Dendritic cell treated with granulocyte-macrophage colony-stimulating factor and Interleukin-4, amounts not matched to agents 40 ng/mL and 50 ng/mL, for 4 days (primary cell): ENCODE measurements at regions of chr12 and their contacts with region 1.

Region 1: GRCh38 chr12:85866986-85867776 is 6.9 kb upstream of the NTS start:
- H3K4me3 Mint-ChIP-seq: no peak overlapping the region
- H3K27ac Mint-ChIP-seq: no peak overlapping the region
- H3K4me1 Mint-ChIP-seq: no peaks in the 10 kb centered on the region
- H3K27me3 Mint-ChIP-seq: no peaks in the 10 kb centered on the region

Region 2: DNA sequence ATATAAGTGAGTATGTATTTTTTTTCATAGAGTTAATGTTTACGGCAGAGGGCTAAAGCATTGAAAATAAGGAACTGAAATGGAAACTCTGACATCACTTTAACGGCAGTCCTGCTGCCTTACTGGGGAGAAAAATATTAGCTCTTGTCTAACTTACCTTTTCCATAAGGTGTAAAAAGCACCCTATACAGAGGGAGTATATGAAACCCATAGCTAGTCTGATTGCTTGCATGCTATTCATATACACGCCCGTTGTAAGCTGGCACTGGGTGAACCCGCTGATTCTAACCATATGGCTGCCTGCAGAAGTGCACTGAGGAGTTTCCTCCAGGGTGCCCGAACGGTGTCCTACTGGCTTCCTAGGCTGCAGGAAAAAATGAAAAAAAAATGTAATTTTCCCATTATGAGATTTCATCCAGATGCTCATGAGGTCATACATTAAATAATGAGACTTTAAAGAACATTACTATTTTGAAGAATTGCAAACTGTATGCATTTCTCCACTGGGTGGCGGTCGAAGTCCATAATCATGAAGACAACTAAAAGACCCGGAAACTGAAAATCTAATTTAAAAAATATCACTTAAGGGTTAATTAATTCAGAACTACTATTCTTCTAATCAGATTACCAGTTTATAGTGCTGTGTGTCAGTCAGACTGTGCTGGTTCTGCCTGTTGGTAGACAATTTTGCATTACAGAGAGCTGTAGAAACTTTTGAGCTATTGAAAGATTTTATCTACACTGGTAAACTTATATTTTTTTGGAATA is 442.4 kb before region 1 on chr12:
- intact Hi-C with region 1: loop called (anchors 1 kb)
- H3K4me3 Mint-ChIP-seq: peak overlapping the region; percentile 54
- H3K27ac Mint-ChIP-seq: no peak overlapping the region
- H3K4me1 Mint-ChIP-seq: peaks cover 12% of the 10 kb centered on the region
- H3K27me3 Mint-ChIP-seq: peaks cover 1% of the 10 kb centered on the region

Region 3: DNA sequence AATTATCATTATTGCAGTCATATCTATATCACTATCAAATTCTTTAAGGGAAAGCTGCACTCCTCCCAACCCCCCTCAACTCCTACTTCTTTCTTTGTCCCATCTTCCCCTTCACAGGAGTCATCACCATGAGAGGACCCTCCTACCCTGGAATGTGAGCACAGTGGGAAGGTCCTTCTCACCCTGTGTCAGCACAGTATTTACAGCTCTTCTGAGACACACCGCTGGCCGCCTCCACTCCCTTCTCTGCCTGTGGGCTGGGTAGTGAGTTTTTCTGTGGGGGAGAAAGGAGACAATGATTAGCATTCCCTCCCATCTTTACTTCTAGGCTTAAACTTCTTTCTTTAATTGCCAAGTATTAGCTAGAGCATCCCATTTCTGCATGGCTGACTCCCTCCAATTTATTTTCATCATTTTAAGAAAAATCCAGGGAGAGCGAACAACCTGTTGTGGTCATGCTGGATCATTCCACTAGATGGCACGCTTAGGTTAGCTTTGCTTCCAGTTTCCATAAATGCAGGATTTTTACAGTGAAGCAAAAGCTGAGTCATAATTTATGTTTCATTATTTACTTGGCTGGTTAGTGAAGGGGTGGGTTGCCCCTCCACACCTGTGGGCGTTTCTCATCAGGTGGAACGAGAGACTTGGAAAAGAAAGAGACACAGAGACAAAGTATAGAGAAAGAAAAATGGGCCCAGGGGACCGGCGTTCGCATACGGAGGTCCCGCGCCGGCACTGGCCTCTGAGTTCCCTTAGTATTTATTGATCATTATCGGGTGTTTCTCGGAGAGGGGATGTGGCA is 398.6 kb before region 1 on chr12:
- intact Hi-C with region 1: loop called (anchors 1 kb)
- H3K4me3 Mint-ChIP-seq: peak overlapping the region; percentile 80
- H3K27ac Mint-ChIP-seq: peak overlapping the region; percentile 83
- H3K4me1 Mint-ChIP-seq: peaks cover 14% of the 10 kb centered on the region
- H3K27me3 Mint-ChIP-seq: peaks cover 1% of the 10 kb centered on the region